AG04450 (cell line): ENCODE measurements at regions of chr1 and their contacts with region 1.

Region 1: DNA sequence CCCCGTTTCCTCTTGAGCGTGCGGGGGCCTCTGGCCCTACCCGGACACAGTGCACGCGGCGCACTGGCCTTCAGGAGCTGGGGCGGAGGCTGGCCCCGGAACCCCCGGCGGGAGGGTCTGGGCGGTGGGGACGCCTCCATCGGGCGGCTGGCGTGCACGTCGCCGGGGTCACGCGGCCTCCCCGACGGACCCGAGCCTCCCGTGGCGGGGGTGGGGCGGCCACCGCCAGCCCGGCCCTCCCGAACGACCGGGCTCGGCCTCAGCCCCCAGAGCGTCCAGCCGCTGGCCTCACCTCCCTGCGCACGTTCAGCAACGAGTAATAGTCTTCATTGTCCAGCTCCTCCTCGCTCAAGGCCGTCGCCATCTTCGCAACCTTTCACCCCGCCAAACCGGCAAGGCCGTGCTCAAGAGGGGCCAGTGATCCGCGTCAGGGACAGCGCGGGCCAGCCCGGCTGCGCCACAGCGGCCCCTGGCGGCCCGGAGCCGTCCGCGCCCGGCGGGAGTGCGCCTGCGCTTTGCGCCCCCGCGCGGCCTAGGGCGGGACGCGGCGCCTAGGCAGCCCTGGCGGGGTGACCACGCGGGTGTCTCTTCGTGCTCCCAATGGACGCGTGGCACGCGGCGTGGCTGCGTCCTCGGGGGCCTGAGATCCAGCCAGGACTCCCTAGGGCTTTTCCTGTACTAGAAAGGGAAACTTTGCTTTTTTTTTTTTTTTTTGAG is at the start of gene DNAJC11:
- DNase-seq: peak; percentile 53
- H3K4me3 ChIP-seq: peak within 1 kb of the TSS; percentile 99
- H3K27ac ChIP-seq: peak within 1 kb of the TSS; percentile 11
- H3K27me3 ChIP-seq: no peaks in the 10 kb centered on the region
- CTCF ChIP-seq: peak; percentile 64
- polyA plus RNA-seq, gene DNAJC11: 38.9 and 41.9 TPM in 2 replicates

Region 2: GRCh38 chr1:6686294-6686693 is 15.3 kb before region 1 on chr1:
- CTCF ChIA-PET with region 1: interaction called, 28 read pairs
- POLR2A ChIA-PET with region 1: interaction called, 3 read pairs
- DNase-seq: no peak
- H3K4me3 ChIP-seq: peak overlapping the region; percentile 18; the same call in 1 of the 2 replicates
- H3K27ac ChIP-seq: peak overlapping the region; percentile 87
- H3K27me3 ChIP-seq: no peaks in the 10 kb centered on the region
- CTCF ChIP-seq: no peak